Activated CD8-positive, alpha-beta T cell treated with anti-CD3 and anti-CD28 coated beads for 36 hours (primary cell): ENCODE measurements at regions of chr1 and their contacts with region 1.

Region 1: DNA sequence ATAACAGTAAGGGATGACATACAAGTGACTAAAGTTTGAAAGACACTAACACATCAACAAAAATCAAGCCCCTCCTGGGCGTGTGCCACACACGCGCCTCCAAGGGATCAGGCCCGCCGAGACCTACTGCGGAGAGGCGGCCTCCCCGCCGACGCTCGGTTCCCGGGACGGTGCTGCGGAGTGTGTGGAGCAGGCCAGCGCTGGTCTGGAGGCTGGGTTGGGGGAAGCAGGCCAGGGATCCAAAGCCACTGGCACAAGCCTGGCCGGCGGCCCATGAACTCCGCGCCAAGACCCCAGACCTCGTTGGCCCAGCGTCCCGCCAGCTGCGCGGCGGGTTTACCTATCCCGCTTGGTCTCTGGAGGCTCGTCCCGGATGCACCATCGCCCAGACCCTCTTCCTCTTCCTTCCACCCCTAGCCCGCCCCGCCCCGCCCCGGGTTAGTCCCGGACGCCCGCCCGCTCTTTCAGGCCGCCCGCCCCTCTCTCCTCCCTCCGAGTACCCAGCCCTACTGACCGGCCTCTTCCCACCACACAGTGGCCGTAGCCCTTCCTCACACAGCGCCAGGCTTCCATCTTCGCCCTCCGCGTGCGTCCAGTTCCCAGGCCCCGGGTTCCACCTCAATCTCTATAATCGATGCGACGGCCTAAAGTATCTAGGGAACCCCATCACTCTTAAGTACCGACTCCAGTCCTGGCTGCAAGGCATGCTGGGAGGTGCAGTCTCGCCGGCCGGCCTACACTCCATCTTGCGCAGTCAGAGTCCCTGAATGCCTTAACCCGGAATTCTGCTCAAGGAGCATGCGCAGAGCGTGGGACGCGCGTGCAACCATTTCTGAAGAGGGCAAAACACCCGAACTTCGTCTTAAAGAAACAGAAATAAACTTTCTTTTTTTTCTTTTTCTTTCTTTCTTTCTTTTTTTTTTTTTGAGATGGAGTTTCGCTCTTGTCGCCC is at the start of gene ANGEL2:
- DNase-seq: peak; percentile 98
- ATAC-seq: peak; percentile 98
- H3K4me3 Mint-ChIP-seq: peak within 1 kb of the TSS; percentile 96
- H3K27ac Mint-ChIP-seq: peak within 1 kb of the TSS; percentile 100
- H3K4me1 Mint-ChIP-seq: peaks cover 26% of the 10 kb centered on the region
- H3K27me3 Mint-ChIP-seq: no peaks in the 10 kb centered on the region
- CTCF ChIP-seq: no peak
- total RNA-seq, gene ANGEL2: 41.1 to 44.2 TPM

Region 2: DNA sequence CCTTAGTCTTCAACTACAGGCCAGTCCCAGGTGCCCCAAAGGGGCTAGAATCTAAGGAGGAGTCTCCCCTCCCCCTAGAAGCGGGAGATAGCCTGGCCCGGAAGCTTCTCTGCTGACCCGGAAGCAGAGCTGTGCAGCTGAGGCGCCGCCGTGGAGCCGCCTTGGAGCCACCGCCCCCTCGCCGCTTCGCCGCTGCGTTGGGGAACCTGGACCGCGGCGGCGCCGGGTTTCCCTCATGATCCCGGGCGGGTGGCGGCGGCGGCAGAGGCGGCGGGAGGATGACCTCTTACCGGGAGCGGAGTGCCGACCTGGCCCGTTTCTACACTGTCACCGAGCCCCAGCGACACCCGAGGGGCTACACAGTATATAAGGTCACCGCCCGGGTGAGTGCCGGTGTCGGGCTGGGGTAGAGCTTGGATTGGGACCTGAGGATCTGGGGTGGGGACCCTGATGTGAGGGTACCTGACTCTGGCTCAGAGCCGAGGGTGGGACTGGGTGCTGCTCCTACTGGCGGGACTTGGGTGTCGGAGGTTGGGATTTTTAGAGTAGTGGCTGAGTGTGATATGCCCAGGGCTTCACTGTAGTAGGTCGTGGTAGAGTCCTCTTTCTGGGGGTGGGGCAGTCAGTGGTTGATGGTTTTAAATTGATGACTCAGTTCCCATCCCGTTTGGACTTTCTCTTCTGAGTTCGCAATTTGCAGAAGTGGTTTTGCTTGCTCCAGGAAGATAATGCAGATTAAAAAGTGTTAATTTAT is 35.9 kb after region 1 on chr1 and contains the start of gene RPS6KC1:
- CTCF ChIA-PET with region 1: interaction called, 3 read pairs
- POLR2A ChIA-PET with region 1: interaction called, 3 read pairs
- intact Hi-C with region 1: loop called (anchors 1 kb)
- DNase-seq: peak; percentile 89
- ATAC-seq: peak; percentile 95
- H3K4me3 Mint-ChIP-seq: peak within 1 kb of the TSS; percentile 81
- H3K27ac Mint-ChIP-seq: peak within 1 kb of the TSS; percentile 91
- H3K4me1 Mint-ChIP-seq: peaks cover 23% of the 10 kb centered on the region
- H3K27me3 Mint-ChIP-seq: peaks cover 11% of the 10 kb centered on the region
- CTCF ChIP-seq: no peak
- total RNA-seq, gene RPS6KC1: 5.3 TPM